Activated CD4-positive, alpha-beta T cell treated with anti-CD3 and anti-CD28 coated beads for 36 hours (primary cell): ENCODE measurements at regions of chr12 and their contacts with region 1.

Region 1: GRCh38 chr12:22334410-22335290 is at the start of gene ST8SIA1:
- DNase-seq: peak; percentile 69
- ATAC-seq: peak; percentile 35
- H3K4me3 Mint-ChIP-seq: peak within 1 kb of the TSS; percentile 79
- H3K27ac Mint-ChIP-seq: peak within 1 kb of the TSS; percentile 66
- H3K4me1 Mint-ChIP-seq: peaks cover 29% of the 10 kb centered on the region
- H3K27me3 Mint-ChIP-seq: peaks cover 11% of the 10 kb centered on the region
- total RNA-seq, gene ST8SIA1: 1.5 to 1.6 TPM

Region 2: DNA sequence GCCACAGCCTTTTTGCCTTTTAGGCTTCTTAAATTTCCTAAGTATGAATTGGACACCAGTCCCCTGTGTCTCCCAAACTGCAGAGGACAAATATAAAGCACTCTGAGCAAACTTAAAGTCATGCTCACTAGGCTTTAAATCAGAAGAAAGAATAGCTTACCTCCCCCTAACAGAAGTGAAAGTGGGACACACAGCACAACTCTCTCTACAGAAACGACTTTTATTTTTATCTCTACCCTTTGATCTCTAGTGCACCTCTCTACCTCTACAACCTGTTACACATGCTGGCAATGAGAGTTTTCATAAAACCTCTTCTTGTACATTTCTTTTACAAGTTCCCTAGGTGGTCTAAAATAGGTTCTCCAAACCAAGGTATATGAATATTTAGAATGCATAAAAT is 942.3 kb before region 1 on chr12:
- CTCF ChIA-PET with region 1: no interaction called
- POLR2A ChIA-PET with region 1: no interaction called
- intact Hi-C with region 1: no loop called
- DNase-seq: no peak
- ATAC-seq: peak; percentile 39
- H3K4me3 Mint-ChIP-seq: no peak overlapping the region
- H3K27ac Mint-ChIP-seq: no peak overlapping the region
- H3K4me1 Mint-ChIP-seq: peaks cover 5% of the 10 kb centered on the region
- H3K27me3 Mint-ChIP-seq: peaks cover 5% of the 10 kb centered on the region

Region 3: GRCh38 chr12:22046090-22046967 is 288.3 kb before region 1 on chr12 and contains the start of gene CMAS:
- CTCF ChIA-PET with region 1: interaction called, 6 read pairs
- POLR2A ChIA-PET with region 1: no interaction called
- intact Hi-C with region 1: loop called (anchors 1 to 2 kb)
- DNase-seq: peak; percentile 90
- ATAC-seq: peak; percentile 88
- H3K4me3 Mint-ChIP-seq: peak within 1 kb of the TSS; percentile 82
- H3K27ac Mint-ChIP-seq: peak within 1 kb of the TSS; percentile 92
- H3K4me1 Mint-ChIP-seq: peaks cover 51% of the 10 kb centered on the region
- H3K27me3 Mint-ChIP-seq: no peaks in the 10 kb centered on the region
- total RNA-seq, gene CMAS: 33.5 to 52.1 TPM

Region 4: DNA sequence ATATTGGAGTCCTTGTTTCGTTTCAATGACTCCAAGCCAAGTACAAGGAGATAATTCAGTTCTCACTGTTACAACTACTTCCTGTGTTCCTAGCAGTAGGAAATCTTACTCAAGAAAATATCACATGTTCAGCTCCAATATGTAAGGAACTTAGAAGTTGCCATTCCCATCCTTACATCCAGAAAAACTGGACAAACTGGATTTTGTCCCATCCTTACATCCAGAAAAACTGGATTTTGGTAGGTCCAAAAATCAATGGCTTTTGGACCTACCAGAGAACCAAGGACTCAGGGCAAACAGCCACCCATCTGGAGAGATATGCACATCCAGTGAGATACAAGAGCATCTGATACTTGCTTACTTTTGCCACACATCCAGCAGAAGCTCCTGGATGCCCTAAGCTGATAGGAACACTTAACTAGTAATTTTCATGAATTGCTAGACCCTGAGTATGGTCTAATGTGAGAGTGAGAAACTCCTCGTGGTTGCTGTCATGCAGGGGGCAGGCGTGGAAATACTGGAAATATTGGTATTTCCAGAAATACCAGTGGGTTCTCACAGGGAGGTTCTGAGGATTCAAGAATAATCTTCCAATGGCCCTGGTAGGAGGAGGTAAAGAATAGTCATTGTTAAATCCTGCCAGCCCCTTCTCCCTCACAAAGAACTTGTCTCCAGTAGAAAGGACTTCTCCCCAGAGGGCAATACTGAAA is 264.6 kb before region 1 on chr12:
- CTCF ChIA-PET with region 1: no interaction called
- POLR2A ChIA-PET with region 1: no interaction called
- intact Hi-C with region 1: no loop called
- DNase-seq: no peak
- ATAC-seq: no peak
- H3K4me3 Mint-ChIP-seq: no peak overlapping the region
- H3K27ac Mint-ChIP-seq: no peak overlapping the region
- H3K4me1 Mint-ChIP-seq: peaks cover 7% of the 10 kb centered on the region
- H3K27me3 Mint-ChIP-seq: peaks cover 3% of the 10 kb centered on the region

Region 5: GRCh38 chr12:22100958-22101748 is 233.5 kb before region 1 on chr12:
- CTCF ChIA-PET with region 1: interaction called, 3 read pairs
- POLR2A ChIA-PET with region 1: no interaction called
- intact Hi-C with region 1: loop called (anchors 1 to 2 kb)
- DNase-seq: peak; percentile 62
- ATAC-seq: peak; percentile 65
- H3K4me3 Mint-ChIP-seq: no peak overlapping the region
- H3K27ac Mint-ChIP-seq: no peak overlapping the region
- H3K4me1 Mint-ChIP-seq: peaks cover 14% of the 10 kb centered on the region
- H3K27me3 Mint-ChIP-seq: no peaks in the 10 kb centered on the region

Region 6: DNA sequence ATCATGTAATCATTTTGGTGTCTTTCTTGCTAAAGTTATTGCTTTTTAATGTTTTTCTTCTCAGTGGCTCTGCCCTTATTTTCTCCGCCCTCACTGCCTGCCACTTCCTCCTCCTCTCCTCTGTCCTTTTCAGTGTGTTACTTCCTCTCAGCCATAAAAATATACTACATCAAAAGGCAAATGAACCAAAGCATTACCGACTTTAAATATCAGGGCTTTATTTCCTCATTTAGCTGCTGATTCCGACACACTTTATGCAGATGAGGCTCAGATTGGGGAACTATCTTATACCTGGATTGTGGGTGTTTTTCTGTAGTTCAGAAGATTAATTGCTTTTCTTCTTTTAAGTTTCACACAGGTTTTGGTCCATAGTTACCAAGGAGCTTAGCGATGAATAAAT is 170.5 kb before region 1 on chr12:
- CTCF ChIA-PET with region 1: interaction called, 3 read pairs
- POLR2A ChIA-PET with region 1: no interaction called
- intact Hi-C with region 1: loop called in 1 of 2 experiments (anchors 5 kb)
- DNase-seq: no peak
- ATAC-seq: peak; percentile 44
- H3K4me3 Mint-ChIP-seq: peak overlapping the region; percentile 24
- H3K27ac Mint-ChIP-seq: peak overlapping the region; percentile 69
- H3K4me1 Mint-ChIP-seq: peaks cover 39% of the 10 kb centered on the region
- H3K27me3 Mint-ChIP-seq: no peaks in the 10 kb centered on the region

Region 7: DNA sequence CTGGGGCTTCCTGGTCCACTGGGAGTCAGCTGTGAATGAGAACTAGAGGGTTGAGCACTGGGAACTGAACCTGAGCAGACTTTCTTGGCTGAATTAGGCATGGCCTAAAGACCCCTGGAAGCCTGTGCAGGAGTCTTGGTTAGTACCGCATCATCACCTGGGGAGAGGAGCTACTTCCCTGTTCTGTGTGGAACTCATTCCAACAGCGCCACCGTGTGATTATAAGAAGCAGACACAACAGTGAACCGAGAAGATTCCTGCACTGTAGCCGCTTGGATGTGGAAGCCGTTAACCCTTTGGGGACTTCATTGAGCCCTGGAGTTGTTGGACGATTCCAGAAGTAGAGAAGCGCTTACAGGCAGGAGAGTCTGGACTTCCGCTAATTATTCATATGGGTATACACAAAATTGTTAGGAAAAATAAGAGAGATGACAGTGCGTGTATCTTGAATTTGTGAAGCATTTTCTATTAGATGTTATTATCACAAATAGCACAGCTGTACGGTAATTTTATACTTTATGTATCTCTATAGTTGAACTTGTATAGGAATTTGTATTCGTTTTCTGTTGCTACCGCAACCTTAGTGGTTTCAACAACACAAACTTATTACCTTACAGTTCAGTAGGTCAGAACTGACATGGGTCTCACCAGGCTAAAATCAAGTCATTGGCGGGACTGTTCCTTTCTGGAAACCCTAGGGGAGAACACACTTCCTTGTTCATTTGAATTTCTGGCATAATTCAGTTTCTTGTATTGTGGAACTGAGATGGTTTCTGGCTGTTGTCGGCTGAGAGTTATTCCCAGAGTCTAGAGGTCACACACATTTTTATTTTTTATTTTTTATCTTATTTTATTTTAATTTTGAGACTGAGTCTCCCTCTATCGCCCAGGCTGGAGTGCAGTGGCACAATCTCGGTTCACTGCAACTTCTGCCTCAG is 109.0 kb after region 1 on chr12:
- CTCF ChIA-PET with region 1: interaction called, 12 read pairs
- POLR2A ChIA-PET with region 1: interaction called, 3 read pairs
- intact Hi-C with region 1: loop called (anchors 1 to 2 kb)
- DNase-seq: peak; percentile 72
- ATAC-seq: peak; percentile 99
- H3K4me3 Mint-ChIP-seq: no peak overlapping the region
- H3K27ac Mint-ChIP-seq: no peak overlapping the region
- H3K4me1 Mint-ChIP-seq: no peaks in the 10 kb centered on the region
- H3K27me3 Mint-ChIP-seq: no peaks in the 10 kb centered on the region

Region 8: GRCh38 chr12:22544038-22544979 is 209.7 kb after region 1 on chr12 and contains the start of gene C2CD5:
- CTCF ChIA-PET with region 1: no interaction called
- POLR2A ChIA-PET with region 1: no interaction called
- intact Hi-C with region 1: loop called (anchors 5 to 10 kb)
- DNase-seq: peak; percentile 97
- ATAC-seq: peak; percentile 88
- H3K4me3 Mint-ChIP-seq: peak within 1 kb of the TSS; percentile 96
- H3K27ac Mint-ChIP-seq: peak within 1 kb of the TSS; percentile 94
- H3K4me1 Mint-ChIP-seq: peaks cover 36% of the 10 kb centered on the region
- H3K27me3 Mint-ChIP-seq: peaks cover 4% of the 10 kb centered on the region
- total RNA-seq, gene C2CD5: 29.5 to 31.6 TPM

Region 9: GRCh38 chr12:22899184-22899583 is 564.5 kb after region 1 on chr12:
- CTCF ChIA-PET with region 1: no interaction called
- POLR2A ChIA-PET with region 1: no interaction called
- intact Hi-C with region 1: no loop called
- DNase-seq: no peak
- ATAC-seq: no peak
- H3K4me3 Mint-ChIP-seq: no peak overlapping the region
- H3K27ac Mint-ChIP-seq: no peak overlapping the region
- H3K4me1 Mint-ChIP-seq: no peaks in the 10 kb centered on the region
- H3K27me3 Mint-ChIP-seq: no peaks in the 10 kb centered on the region

Region 10: GRCh38 chr12:23028158-23028802 is 693.6 kb after region 1 on chr12:
- CTCF ChIA-PET with region 1: no interaction called
- POLR2A ChIA-PET with region 1: no interaction called
- intact Hi-C with region 1: no loop called
- DNase-seq: no peak
- ATAC-seq: no peak
- H3K4me3 Mint-ChIP-seq: no peak overlapping the region
- H3K27ac Mint-ChIP-seq: no peak overlapping the region
- H3K4me1 Mint-ChIP-seq: no peaks in the 10 kb centered on the region
- H3K27me3 Mint-ChIP-seq: no peaks in the 10 kb centered on the region